ENCODE measurements at regions of chrX and their contacts with region 1.

Region 1: GRCh38 chrX:121581862-121582261 is 534.5 kb downstream of the GLUD2 start:
- DNase-seq: no peak
- H3K4me3 ChIP-seq: no peak overlapping the region
- H3K27ac ChIP-seq: no peak overlapping the region
- H3K4me1 ChIP-seq: no peaks in the 10 kb centered on the region
- H3K27me3 ChIP-seq: no peaks in the 10 kb centered on the region
- CTCF ChIP-seq: no peak

Region 2: DNA sequence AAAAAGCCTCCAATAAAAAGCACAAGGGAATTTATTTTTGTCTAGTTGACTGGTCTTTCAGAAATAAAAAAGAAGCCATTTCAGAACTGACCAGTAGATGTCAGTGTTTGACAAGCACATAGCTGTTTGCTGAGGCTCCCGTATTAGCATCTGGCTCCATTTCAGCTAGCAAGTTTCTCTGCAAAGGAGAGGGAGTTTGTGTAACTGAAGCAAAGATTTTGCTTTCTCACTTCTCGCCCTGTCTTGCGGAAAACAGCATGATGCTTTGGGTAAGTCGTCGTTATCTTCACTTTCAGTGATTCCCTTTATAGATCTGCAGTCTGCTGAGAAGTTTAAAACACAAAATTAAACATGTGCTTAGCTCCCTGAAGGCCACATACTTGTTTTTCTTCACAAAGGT is 791.7 kb before region 1 on chrX:
- intact Hi-C with region 1: loop called (anchors 10 kb)
- DNase-seq: peak; percentile 20
- H3K4me3 ChIP-seq: no peak overlapping the region
- H3K27ac ChIP-seq: no peak overlapping the region
- H3K4me1 ChIP-seq: no peaks in the 10 kb centered on the region
- H3K27me3 ChIP-seq: no peaks in the 10 kb centered on the region
- CTCF ChIP-seq: peak; percentile 76

Region 3: GRCh38 chrX:121298499-121298898 is 283.4 kb before region 1 on chrX:
- intact Hi-C with region 1: no loop called
- DNase-seq: no peak
- H3K4me3 ChIP-seq: no peak overlapping the region
- H3K27ac ChIP-seq: no peak overlapping the region
- H3K4me1 ChIP-seq: no peaks in the 10 kb centered on the region
- H3K27me3 ChIP-seq: no peaks in the 10 kb centered on the region
- CTCF ChIP-seq: no peak

Measured in colonic mucosa (tissue), 4 donors.